ENCODE measurements at regions of chr6 and their contacts with region 1.

Region 1: DNA sequence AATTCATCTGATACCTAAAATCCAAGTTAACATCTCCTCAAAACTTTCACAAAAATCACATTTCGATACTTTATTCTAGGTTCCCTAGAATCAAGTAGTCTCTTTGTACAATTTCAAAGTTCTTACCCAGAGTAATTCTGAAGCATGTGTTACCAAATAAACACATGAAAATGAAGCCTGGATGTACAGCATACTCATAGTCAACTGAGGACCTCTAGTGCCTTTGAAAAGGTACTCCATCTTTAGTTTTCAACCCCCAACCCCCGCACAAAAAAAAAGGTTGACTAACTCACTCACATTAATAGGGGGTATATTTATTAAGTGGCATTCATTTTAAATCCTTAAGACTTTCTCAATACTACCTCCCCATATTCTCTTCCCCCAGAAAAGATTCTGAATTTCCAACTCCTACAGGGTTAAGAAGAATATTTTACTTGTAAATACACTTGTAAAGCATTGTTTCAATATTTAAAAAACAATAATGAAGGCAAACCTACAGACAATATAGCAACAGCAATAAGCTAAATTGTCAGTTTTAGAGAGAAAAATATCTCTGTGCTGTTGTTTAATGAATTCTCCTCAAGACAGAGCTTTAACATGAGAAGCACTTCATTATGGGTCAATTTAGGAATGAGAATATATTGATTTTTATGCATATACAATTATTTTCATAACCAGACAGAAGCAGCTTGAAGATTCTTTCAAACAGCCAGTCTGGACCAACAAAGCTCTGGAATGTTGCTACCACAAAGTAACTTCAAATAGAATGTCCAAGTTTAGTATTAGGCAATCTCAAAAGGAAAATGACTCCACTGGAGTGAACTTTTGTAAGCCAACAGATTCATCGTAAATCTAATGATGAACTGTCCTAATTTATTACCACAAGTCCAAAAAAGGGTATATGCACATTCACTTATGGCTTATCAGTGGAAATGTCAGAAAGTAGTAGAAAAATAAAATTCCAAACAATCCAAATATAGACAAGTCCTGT is 3.3 kb downstream of the PLN start:
- DNase-seq: no peak
- ATAC-seq: peak; percentile 49

Region 2: DNA sequence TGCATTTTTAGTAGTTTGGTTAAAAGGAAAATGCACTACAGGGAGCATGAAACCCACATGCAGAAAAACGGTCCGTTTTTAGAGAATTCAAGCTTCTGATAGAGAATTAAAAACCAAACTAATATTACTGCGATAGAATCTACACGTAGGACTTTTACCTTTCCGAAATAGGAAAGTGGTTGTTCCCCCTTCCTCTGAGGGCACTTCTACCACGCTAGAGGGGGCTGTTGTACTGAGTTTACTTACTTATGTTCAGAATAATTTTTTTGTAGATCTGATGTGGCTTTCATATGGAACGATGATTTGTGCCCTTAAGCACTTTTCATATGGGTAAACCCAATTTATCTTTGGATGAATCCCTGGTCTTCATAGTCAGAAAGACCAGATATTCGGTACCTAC is 267.6 kb before region 1 on chr6:
- intact Hi-C with region 1: loop called in 1 of 2 experiments (anchors 10 kb)
- DNase-seq: peak in 1 of 2 donors; percentile 9
- ATAC-seq: no peak

Region 3: GRCh38 chr6:118639054-118639964 is 88.0 kb after region 1 on chr6:
- intact Hi-C with region 1: no loop called
- DNase-seq: no peak
- ATAC-seq: no peak

Measured in left colon (tissue), 2 donors.